ENCODE measurements at regions of chr1 and their contacts with region 1.

Region 1: GRCh38 chr1:116763787-116764465 is 9.7 kb downstream of the CD2 start:
- DNase-seq: no peak
- H3K4me3 ChIP-seq: no peak overlapping the region
- H3K27ac ChIP-seq: no peak overlapping the region
- H3K4me1 ChIP-seq: peaks cover 14 to 44% (median 22%) of the 10 kb centered on the region in 4 experiments
- H3K27me3 ChIP-seq: no peaks in the 10 kb centered on the region

Region 2: DNA sequence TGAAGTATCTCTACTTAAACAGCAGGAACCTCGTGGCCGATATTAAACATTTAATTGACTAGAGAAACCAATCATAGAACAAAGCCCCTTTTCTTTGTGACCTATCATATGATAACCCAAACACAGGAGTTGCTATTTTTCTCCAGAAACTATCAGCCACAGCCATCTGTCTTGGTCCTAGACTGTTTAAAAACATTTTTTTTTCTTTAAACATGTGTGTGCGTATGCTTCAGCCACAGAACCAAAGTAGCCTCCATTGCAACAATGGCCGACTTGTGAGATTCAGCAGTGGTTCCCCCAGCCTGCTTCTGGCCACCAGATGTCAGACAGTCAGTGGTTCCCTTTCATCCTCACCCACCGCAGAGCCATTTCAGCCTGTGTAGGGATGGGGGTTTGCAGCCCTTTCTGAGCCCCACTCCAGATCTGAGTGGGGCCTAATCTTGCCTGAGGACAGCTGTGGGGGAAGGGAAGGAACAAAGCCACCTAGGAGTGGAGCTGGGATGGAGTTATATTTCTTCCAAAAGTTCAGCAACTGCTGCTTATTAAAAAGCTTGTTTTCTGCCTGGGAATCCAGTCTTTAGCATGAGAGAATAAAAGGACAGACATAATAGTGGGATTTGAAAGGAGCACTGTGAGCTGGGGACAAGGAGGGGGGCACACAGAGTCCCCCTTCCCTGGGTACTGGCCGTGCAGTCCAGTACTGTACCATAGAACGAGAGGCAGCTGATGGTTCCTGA is 84.7 kb before region 1 on chr1:
- CTCF ChIA-PET with region 1: no interaction called
- POLR2A ChIA-PET with region 1: no interaction called
- DNase-seq: peak; percentile 38 to 75 (median 58)
- H3K4me3 ChIP-seq: no peak overlapping the region
- H3K27ac ChIP-seq: no peak overlapping the region
- H3K4me1 ChIP-seq: peaks cover 0 to 2% (median 0%) of the 10 kb centered on the region in 4 experiments
- H3K27me3 ChIP-seq: peaks cover 0 to 4% (median 0%) of the 10 kb centered on the region in 5 experiments

Region 3: DNA sequence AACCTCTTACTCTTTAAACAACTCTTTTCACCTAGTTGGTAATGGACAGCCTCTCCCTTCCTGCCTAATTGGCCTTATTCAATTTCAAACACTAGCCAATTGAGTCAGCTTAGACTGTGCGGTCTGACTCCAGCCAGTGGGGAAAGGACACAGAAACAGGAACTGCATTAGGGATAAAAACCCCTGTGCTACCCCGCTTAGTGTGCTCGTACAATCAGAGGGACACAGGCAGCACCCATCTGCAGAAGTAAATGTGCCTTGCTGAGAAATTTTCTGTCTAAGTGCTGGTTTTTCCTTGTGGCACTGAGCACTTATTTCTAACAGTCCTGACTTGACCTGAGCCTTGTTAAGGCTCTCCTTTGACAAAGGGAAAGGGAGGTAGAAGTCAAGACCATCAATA is 15.7 kb before region 1 on chr1:
- CTCF ChIA-PET with region 1: interaction called, 11 read pairs
- POLR2A ChIA-PET with region 1: no interaction called
- DNase-seq: no peak
- H3K4me3 ChIP-seq: no peak overlapping the region
- H3K27ac ChIP-seq: no peak overlapping the region
- H3K4me1 ChIP-seq: peaks cover 4 to 16% (median 10%) of the 10 kb centered on the region in 4 experiments
- H3K27me3 ChIP-seq: no peaks in the 10 kb centered on the region

Measured in common myeloid progenitor, CD34-positive (primary cell).